Activated CD4-positive, alpha-beta memory T cell treated with anti-CD3 and anti-CD28 coated beads for 36 hours (primary cell): ENCODE measurements at regions of chr5 and their contacts with region 1.

Region 1: GRCh38 chr5:96896806-96897205 is 20.5 kb downstream of the ERAP2 start:
- DNase-seq: peak; percentile 62
- H3K4me3 Mint-ChIP-seq: peak overlapping the region; percentile 79
- H3K27ac Mint-ChIP-seq: peak overlapping the region; percentile 93
- H3K4me1 Mint-ChIP-seq: peaks cover 48% of the 10 kb centered on the region
- H3K27me3 Mint-ChIP-seq: no peaks in the 10 kb centered on the region

Region 2: GRCh38 chr5:96702503-96703383 is 194.1 kb before region 1 on chr5:
- CTCF ChIA-PET with region 1: no interaction called
- POLR2A ChIA-PET with region 1: no interaction called
- intact Hi-C with region 1: loop called (anchors 5 kb)
- DNase-seq: peak; percentile 92
- H3K4me3 Mint-ChIP-seq: peak overlapping the region; percentile 84
- H3K27ac Mint-ChIP-seq: peak overlapping the region; percentile 85
- H3K4me1 Mint-ChIP-seq: peaks cover 52% of the 10 kb centered on the region
- H3K27me3 Mint-ChIP-seq: no peaks in the 10 kb centered on the region

Region 3: DNA sequence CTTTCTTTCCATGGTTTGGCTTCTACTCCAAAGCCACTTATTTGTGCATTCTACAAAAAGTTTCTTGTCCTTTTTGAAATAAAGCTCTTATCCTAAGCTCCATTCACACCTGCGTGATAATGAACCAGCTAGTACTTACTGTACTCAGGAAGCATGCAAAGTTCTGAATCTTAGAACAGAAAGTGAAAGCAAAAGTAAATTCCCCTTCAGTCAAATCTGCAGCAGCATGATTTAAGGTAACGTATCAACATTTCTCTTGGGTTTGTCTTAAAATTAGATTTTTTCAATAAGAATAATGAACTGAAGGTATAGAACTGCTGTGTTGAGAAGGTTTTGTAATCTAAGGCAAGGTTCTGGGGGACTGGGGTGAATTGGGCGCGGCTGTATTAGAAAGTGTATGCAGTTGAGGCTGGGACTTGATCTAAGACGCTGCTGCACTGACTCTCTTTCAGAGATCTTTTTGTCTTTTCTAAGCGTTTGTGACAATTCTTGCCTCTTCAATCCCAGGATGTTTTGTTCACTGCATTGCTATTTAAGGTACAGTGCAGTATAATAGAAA is 20.4 kb before region 1 on chr5 and contains the start of gene ERAP2:
- CTCF ChIA-PET with region 1: interaction called, 5 read pairs
- POLR2A ChIA-PET with region 1: interaction called, 13 read pairs
- intact Hi-C with region 1: loop called (anchors 1 kb)
- DNase-seq: peak; percentile 30
- H3K4me3 Mint-ChIP-seq: peak within 1 kb of the TSS; percentile 96
- H3K27ac Mint-ChIP-seq: peak within 1 kb of the TSS; percentile 97
- H3K4me1 Mint-ChIP-seq: peaks cover 63% of the 10 kb centered on the region
- H3K27me3 Mint-ChIP-seq: no peaks in the 10 kb centered on the region
- total RNA-seq, gene ERAP2: 44.8 to 48.9 TPM

Region 4: GRCh38 chr5:96919754-96920197 is 23.0 kb after region 1 on chr5:
- CTCF ChIA-PET with region 1: no interaction called
- POLR2A ChIA-PET with region 1: no interaction called
- intact Hi-C with region 1: loop called (anchors 1 kb)
- DNase-seq: peak; percentile 33
- H3K4me3 Mint-ChIP-seq: no peak overlapping the region
- H3K27ac Mint-ChIP-seq: no peak overlapping the region
- H3K4me1 Mint-ChIP-seq: peaks cover 36% of the 10 kb centered on the region
- H3K27me3 Mint-ChIP-seq: no peaks in the 10 kb centered on the region

Region 5: GRCh38 chr5:97094579-97095317 is 197.9 kb after region 1 on chr5:
- CTCF ChIA-PET with region 1: interaction called, 4 read pairs
- POLR2A ChIA-PET with region 1: no interaction called
- intact Hi-C with region 1: loop called (anchors 1 kb)
- DNase-seq: peak; percentile 56
- H3K4me3 Mint-ChIP-seq: peak overlapping the region; percentile 4
- H3K27ac Mint-ChIP-seq: no peak overlapping the region
- H3K4me1 Mint-ChIP-seq: peaks cover 15% of the 10 kb centered on the region
- H3K27me3 Mint-ChIP-seq: peaks cover 14% of the 10 kb centered on the region